Transverse colon (tissue), 4 donors: ENCODE measurements at regions of chr9 and their contacts with region 1.

Region 1: DNA sequence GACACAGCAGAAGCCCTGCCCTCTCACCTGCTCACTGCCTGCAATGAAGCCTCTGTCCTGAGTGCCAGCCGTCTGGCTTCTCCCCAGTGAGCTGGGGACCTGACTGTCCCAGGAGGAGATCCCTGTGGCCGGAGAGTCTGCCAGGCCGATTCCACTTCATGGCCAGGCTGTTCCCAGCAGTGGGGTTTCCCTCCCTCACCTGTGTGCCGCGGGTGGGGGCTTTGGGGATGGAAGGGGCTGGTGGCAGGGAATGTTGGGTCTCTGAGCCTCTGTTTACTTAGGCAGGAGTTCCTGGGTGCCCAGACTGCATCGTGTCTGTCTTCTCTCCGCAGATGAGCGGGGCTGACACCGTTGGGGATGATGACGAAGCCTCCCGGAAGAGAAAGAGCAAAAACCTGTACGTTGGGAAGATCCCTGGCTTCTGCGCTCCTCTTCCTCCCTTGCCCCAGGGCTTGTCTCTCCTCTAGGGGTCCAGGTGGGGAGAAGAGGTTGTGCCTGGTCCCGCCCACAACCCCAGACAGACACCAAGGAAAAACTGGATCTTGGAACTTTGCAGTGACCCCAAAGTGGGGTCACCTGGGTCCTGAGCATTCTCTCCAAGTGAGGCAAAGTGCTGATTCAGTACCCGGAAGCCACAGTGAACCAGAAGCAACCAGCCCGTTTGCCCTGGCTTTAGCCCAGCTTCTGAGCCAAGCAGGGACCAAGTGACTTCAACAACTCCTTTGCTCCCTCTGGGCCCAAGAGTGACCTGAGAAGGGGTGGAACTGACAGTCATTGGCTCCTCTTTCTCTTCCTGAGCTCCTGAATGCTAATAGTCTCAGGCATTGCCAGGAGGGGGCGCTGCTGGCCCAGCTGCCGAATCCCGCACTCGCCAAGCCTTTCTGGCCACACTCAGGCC is 127.7 kb downstream of the RGS3 start:
- DNase-seq: peak; percentile 78
- H3K4me3 ChIP-seq: no peak overlapping the region
- H3K27ac ChIP-seq: no peak overlapping the region
- H3K4me1 ChIP-seq: peaks cover 0 to 29% (median 9%) of the 10 kb centered on the region in 4 donors
- H3K27me3 ChIP-seq: no peaks in the 10 kb centered on the region
- CTCF ChIP-seq: peak; percentile 83 to 91 (median 85)
- EP300 ChIP-seq: no peak
- POLR2A ChIP-seq: no peak

Region 2: DNA sequence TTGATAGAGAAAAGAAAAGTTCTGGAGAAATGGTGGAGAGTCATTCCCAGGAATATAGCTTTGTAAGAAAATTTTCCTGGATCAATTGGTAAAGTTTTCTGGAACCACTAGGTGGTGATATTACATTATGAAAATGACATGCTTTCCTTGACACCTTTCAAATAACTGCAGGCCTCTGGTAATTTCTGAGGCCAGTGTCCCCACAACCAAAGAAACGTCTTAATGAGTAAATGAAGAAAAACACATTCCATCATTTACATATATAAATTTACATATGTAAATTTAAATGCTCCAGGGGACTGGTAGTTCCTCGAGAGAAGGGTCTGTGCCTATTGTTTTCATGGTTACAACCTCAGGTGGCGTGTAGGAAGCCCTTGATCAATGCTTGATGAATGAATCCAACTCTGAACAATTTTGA is 144.9 kb before region 1 on chr9:
- in situ Hi-C with region 1: loop called in 2 of 4 experiments (anchors 5 to 10 kb)
- intact Hi-C with region 1: loop called (anchors 2 kb)
- DNase-seq: no peak
- H3K4me3 ChIP-seq: no peak overlapping the region
- H3K27ac ChIP-seq: peak overlapping the region in 1 of 4 donors; percentile 3
- H3K4me1 ChIP-seq: peaks cover 0 to 3% (median 0%) of the 10 kb centered on the region in 4 donors
- H3K27me3 ChIP-seq: no peaks in the 10 kb centered on the region
- CTCF ChIP-seq: peak; percentile 59 to 79 (median 73)
- EP300 ChIP-seq: no peak
- POLR2A ChIP-seq: no peak

Region 3: GRCh38 chr9:113622600-113623400 is 31.6 kb after region 1 on chr9:
- in situ Hi-C with region 1: no loop called
- intact Hi-C with region 1: no loop called
- DNase-seq: no peak
- H3K4me3 ChIP-seq: no peak overlapping the region
- H3K27ac ChIP-seq: no peak overlapping the region
- H3K4me1 ChIP-seq: peaks cover 8 to 29% (median 14%) of the 10 kb centered on the region in 4 donors
- H3K27me3 ChIP-seq: no peaks in the 10 kb centered on the region
- CTCF ChIP-seq: no peak
- EP300 ChIP-seq: no peak
- POLR2A ChIP-seq: no peak

Region 4: GRCh38 chr9:113648586-113649453 is 57.6 kb after region 1 on chr9:
- in situ Hi-C with region 1: loop called in 1 of 4 experiments (anchors 5 kb)
- intact Hi-C with region 1: no loop called
- DNase-seq: peak; percentile 34
- H3K4me3 ChIP-seq: no peak overlapping the region
- H3K27ac ChIP-seq: peak overlapping the region in 3 of 4 donors; percentile 39 to 52 (median 47)
- H3K4me1 ChIP-seq: peaks cover 0 to 4% (median 0%) of the 10 kb centered on the region in 4 donors
- H3K27me3 ChIP-seq: no peaks in the 10 kb centered on the region
- CTCF ChIP-seq: no peak
- EP300 ChIP-seq: no peak
- POLR2A ChIP-seq: no peak